ENCODE measurements at regions of chr19 and their contacts with region 1.

Region 1: GRCh38 chr19:50003810-50004419 is 21.3 kb downstream of the VRK3 start:
- DNase-seq: peak; percentile 79 to 93
- H3K4me3 ChIP-seq: peak overlapping the region; percentile 31; the same call in 1 of the 2 replicates
- H3K27ac ChIP-seq: peak overlapping the region; percentile 87
- H3K4me1 ChIP-seq: peaks cover 24% of the 10 kb centered on the region
- H3K27me3 ChIP-seq: no peaks in the 10 kb centered on the region
- CTCF ChIP-seq: no peak

Region 2: DNA sequence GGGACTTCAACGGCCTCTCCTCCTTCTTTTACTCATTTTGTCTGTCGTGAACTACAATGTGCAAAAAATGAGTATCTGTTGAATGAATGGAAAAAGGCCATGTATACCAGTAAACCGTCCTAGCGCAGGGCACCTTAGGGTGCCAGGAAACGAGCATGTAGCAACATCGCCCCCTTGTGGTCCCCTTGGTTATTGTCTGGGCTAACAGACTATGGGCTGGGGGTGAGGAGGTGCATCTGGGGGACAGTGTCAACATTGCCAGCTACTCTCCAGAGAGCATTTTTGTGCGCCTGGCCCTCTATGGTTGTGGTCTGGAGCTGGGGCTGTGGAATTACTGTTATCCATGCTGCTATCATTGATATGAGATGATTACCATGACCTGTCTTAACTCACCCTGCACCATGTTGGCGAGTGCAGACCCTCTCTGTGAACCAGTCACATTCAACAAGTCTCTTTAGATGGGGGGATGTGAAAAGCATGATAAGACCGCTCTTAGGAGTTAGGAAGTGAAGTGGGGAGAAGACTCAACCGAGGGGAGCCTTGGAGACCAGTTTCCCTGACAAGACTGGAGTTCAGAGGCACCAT is 20.2 kb before region 1 on chr19:
- CTCF ChIA-PET with region 1: no interaction called
- POLR2A ChIA-PET with region 1: interaction called, 13 read pairs
- intact Hi-C with region 1: loop called (anchors 1 kb)
- DNase-seq: peak; percentile 46 to 52
- H3K4me3 ChIP-seq: no peak overlapping the region
- H3K27ac ChIP-seq: no peak overlapping the region
- H3K4me1 ChIP-seq: no peaks in the 10 kb centered on the region
- H3K27me3 ChIP-seq: no peaks in the 10 kb centered on the region
- CTCF ChIP-seq: peak; percentile 98

Region 3: GRCh38 chr19:50025024-50025789 is 21.3 kb after region 1 on chr19 and contains the start of gene VRK3:
- CTCF ChIA-PET with region 1: no interaction called
- POLR2A ChIA-PET with region 1: interaction called, 14 read pairs
- intact Hi-C with region 1: loop called (anchors 1 kb)
- DNase-seq: peak; percentile 99
- H3K4me3 ChIP-seq: peak within 1 kb of the TSS; percentile 64
- H3K27ac ChIP-seq: peak within 1 kb of the TSS; percentile 27
- H3K4me1 ChIP-seq: peaks cover 27% of the 10 kb centered on the region
- H3K27me3 ChIP-seq: no peaks in the 10 kb centered on the region
- CTCF ChIP-seq: no peak; the same call in 1 of the 2 replicates
- total RNA-seq, gene VRK3: 53.3 and 62.5 TPM in 2 replicates

Region 4: GRCh38 chr19:50476224-50476942 is 472.5 kb after region 1 on chr19 and contains the starts of genes EMC10 and GARIN5A:
- CTCF ChIA-PET with region 1: no interaction called
- POLR2A ChIA-PET with region 1: interaction called, 17 read pairs
- intact Hi-C with region 1: no loop called
- DNase-seq: peak; percentile 90 to 96
- H3K4me3 ChIP-seq: peak within 1 kb of the TSS; percentile 72
- H3K27ac ChIP-seq: peak within 1 kb of the TSS; percentile 65
- H3K4me1 ChIP-seq: peaks cover 8% of the 10 kb centered on the region
- H3K27me3 ChIP-seq: no peaks in the 10 kb centered on the region
- CTCF ChIP-seq: no peak
- total RNA-seq, gene EMC10: 118 and 121 TPM in 2 replicates
- total RNA-seq, gene GARIN5A: 3.7 and 7.3 TPM in 2 replicates

Measured in PC-9 (cell line).